ENCODE measurements at regions of chr14 and their contacts with region 1.

Region 1: GRCh38 chr14:94423453-94424056 is 29.0 kb downstream of the SERPINA11 start:
- DNase-seq: peak; percentile 41
- H3K4me3 ChIP-seq: peak overlapping the region; percentile 14 to 61; a peak in 3 of 4 replicates
- H3K27ac ChIP-seq: no peak overlapping the region
- H3K4me1 ChIP-seq: no peaks in the 10 kb centered on the region
- H3K27me3 ChIP-seq: peaks cover 6% of the 10 kb centered on the region; the same call in 1 of the 2 replicates
- CTCF ChIP-seq: peak; percentile 79
- EP300 ChIP-seq: no peak
- RAD21 ChIP-seq: peak; percentile 50

Region 2: GRCh38 chr14:94181835-94182234 is 241.7 kb before region 1 on chr14:
- CTCF ChIA-PET with region 1: no interaction called
- POLR2A ChIA-PET with region 1: no interaction called
- DNase-seq: no peak
- H3K4me3 ChIP-seq: no peak overlapping the region
- H3K27ac ChIP-seq: no peak overlapping the region
- H3K4me1 ChIP-seq: peaks cover 0 to 3% of the 10 kb centered on the region in 2 experiments; a peak in 2 of 4 replicates
- H3K27me3 ChIP-seq: no peaks in the 10 kb centered on the region
- CTCF ChIP-seq: no peak
- EP300 ChIP-seq: no peak
- RAD21 ChIP-seq: no peak

Region 3: DNA sequence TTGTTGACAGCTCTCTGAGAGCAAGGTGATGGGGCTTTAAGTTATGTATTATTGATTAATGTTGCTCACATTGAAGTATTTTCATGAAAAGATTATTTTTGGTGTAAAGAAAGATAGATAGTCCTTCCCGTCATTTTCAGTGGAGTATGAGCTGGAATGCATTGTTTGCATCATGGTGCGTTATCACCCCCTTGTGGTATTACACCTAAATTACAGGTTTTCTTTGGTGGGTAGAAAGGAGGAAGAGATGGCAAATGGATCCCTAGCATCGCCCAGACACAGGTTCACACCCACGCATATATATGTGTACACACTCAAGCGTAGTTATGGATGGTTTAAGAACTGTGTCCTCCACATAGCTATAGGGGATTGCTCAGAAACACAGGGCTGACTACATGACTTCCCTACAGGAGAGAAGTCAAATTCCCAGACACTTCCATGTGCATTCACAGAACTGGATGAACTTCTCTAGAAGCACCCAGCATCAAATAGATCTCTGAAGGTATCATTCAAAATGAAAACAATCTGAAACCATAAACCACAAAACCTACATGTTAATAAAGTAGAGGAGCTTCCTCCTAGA is 116.1 kb before region 1 on chr14:
- CTCF ChIA-PET with region 1: no interaction called
- POLR2A ChIA-PET with region 1: no interaction called
- DNase-seq: no peak
- H3K4me3 ChIP-seq: no peak overlapping the region; a peak in 1 of 4 replicates
- H3K27ac ChIP-seq: no peak overlapping the region
- H3K4me1 ChIP-seq: no peaks in the 10 kb centered on the region
- H3K27me3 ChIP-seq: no peaks in the 10 kb centered on the region
- CTCF ChIP-seq: peak; percentile 45
- EP300 ChIP-seq: no peak
- RAD21 ChIP-seq: 0 out of 2 replicates have a peak, but pooled peaks have one; percentile 9

Region 4: DNA sequence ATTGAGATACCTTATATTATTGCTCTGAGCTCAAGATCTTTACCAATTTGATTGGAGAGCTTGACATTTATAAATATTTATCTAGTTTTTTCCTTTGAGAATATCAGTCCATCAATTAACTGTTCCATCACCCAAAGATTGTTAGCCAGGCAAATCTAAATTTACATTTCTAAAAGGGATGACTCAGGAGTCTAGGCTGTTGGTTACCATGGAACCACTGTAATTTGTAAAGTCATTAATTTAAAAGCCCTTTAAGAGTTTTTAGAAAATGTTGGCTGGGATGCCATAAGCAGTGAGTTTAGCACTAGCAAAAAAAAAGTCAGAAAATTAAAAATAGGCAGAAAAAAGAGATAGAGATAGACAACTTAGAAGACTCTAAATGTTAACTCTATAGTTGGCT is 15.6 kb before region 1 on chr14:
- CTCF ChIA-PET with region 1: interaction called, 18 read pairs
- POLR2A ChIA-PET with region 1: no interaction called
- DNase-seq: no peak
- H3K4me3 ChIP-seq: no peak overlapping the region
- H3K27ac ChIP-seq: no peak overlapping the region
- H3K4me1 ChIP-seq: no peaks in the 10 kb centered on the region
- H3K27me3 ChIP-seq: no peaks in the 10 kb centered on the region
- CTCF ChIP-seq: no peak
- EP300 ChIP-seq: no peak
- RAD21 ChIP-seq: no peak

Region 5: GRCh38 chr14:94412671-94413638 is 10.6 kb before region 1 on chr14:
- CTCF ChIA-PET with region 1: interaction called, 18 read pairs
- POLR2A ChIA-PET with region 1: no interaction called
- DNase-seq: no peak
- H3K4me3 ChIP-seq: no peak overlapping the region
- H3K27ac ChIP-seq: no peak overlapping the region
- H3K4me1 ChIP-seq: no peaks in the 10 kb centered on the region
- H3K27me3 ChIP-seq: no peaks in the 10 kb centered on the region
- CTCF ChIP-seq: peak; percentile 58
- EP300 ChIP-seq: no peak
- RAD21 ChIP-seq: peak; percentile 43

Region 6: GRCh38 chr14:94458558-94459205 is 35.1 kb after region 1 on chr14:
- CTCF ChIA-PET with region 1: interaction called, 10 read pairs
- POLR2A ChIA-PET with region 1: no interaction called
- DNase-seq: no peak
- H3K4me3 ChIP-seq: no peak overlapping the region
- H3K27ac ChIP-seq: no peak overlapping the region
- H3K4me1 ChIP-seq: no peaks in the 10 kb centered on the region
- H3K27me3 ChIP-seq: no peaks in the 10 kb centered on the region; the same call in 1 of the 2 replicates
- CTCF ChIP-seq: no peak
- EP300 ChIP-seq: no peak
- RAD21 ChIP-seq: no peak